ENCODE measurements at regions of chr1 and their contacts with region 1.

Region 1: DNA sequence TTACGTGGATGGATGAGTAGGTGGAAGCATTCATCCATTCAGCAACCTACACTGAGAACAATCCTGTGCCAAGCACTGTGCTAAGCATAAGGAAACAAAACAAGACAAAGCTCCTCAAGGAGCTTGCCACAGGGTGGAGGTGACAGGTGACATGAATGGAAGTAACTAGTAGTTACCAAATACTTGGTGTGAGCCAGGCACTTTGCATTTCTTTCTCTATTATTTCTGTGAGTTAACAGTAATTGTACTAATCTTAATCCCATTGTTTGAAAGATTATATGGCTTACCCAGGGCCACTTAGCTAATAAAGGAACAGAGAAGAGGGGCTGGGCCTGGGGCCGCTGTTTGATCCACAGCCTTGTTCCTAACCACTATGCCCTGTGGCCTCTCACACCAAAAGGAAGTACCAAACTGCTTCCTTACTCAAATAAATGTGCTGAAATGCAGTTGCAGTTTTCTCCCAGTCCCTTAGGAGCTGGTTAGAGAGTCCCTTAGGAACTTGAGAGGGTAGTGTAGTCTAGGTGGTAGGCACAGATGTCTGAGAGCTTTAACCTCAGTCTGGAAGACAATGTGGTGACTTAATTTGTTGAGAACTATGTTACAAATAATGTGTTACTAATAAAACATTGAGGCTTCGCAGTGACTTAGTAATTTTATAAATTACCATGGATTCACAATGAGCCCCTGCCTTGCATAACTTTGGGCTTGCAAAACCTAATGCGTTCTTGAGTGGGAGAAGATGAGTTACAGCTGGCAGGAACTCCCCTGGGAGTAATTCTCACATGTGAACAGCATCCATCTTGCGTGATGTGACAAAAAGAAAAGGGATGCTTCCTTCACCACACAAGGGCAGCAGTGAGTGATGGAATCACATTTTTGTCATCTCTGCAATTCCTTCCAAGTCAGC is 69.8 kb downstream of the MPZL1 start:
- DNase-seq: peak; percentile 98
- H3K4me3 ChIP-seq: no peak overlapping the region
- H3K27ac ChIP-seq: peak overlapping the region; percentile 87
- H3K27me3 ChIP-seq: no peaks in the 10 kb centered on the region
- CTCF ChIP-seq: no peak

Region 2: DNA sequence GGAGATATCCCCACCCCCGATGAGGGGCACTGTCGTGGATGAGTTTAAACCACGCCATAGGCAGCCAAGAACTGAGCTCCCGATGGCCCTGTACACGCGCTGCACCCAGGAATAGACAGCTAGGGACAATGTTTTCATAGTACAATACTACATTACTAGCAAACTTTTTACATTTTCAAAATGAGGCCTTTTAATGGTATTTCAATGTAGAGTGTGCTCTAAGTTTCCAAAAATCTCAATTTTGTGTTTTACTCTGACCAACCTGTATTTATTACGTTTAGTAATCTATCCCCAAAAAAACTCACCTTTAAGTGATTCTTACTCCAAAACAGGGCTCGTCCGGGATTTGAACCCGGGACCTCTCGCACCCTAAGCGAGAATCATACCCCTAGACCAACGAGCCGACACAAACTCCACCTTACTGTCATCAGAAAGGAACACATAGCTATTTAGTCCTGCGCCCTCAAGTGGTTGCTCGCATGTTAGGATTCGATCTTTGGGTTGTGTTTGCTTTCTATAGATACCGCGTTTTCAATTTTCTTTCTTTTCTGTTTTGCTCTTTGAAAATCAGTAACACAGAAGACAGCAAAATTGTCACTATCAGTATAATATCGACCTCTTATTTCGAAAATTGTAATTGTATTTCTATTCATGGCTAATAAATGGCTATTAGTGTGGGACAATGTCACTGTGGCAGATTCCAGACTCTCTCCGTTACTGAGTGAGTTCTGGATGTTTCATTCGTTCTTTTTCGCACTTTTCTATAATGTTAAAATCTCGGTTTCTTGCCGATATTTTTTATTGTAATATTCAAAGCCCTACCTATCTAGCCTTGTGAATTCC is 76.2 kb before region 1 on chr1:
- CTCF ChIA-PET with region 1: interaction called, 11 read pairs
- POLR2A ChIA-PET with region 1: interaction called, 7 read pairs
- DNase-seq: peak; percentile 77
- H3K4me3 ChIP-seq: peak overlapping the region; percentile 95
- H3K27ac ChIP-seq: peak overlapping the region; percentile 90
- H3K27me3 ChIP-seq: no peaks in the 10 kb centered on the region
- CTCF ChIP-seq: peak; percentile 96

Region 3: DNA sequence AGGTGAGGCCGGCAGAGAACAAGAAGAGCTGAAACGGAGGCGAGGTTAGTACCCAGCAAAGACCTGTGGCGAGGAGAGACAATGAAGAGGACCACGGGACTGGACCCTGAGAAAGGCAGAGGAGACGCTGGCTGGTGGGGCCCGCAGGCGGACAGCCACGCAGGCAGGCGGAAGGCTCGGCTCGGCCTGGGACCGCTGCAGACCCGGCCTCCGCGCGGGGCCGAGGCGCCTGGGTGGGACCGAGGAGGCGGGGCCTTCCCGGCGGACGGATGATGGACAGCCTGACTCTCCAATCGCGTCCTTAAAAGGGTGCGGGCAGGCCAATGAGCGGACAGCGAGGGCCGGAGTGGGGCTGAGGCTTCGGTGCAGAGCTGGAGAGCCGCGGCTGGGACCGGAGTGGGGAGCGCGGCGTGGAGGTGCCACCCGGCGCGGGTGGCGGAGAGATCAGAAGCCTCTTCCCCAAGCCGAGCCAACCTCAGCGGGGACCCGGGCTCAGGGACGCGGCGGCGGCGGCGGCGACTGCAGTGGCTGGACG is 69.8 kb before region 1 on chr1 and contains the start of gene MPZL1:
- CTCF ChIA-PET with region 1: interaction called, 4 read pairs
- POLR2A ChIA-PET with region 1: interaction called, 15 read pairs
- DNase-seq: peak; percentile 87
- H3K4me3 ChIP-seq: peak within 1 kb of the TSS; percentile 80
- H3K27ac ChIP-seq: peak within 1 kb of the TSS; percentile 66
- H3K27me3 ChIP-seq: no peaks in the 10 kb centered on the region
- CTCF ChIP-seq: no peak
- polyA plus RNA-seq, gene MPZL1: 144 and 198 TPM in 2 replicates

Region 4: GRCh38 chr1:167775178-167775577 is 16.4 kb before region 1 on chr1:
- CTCF ChIA-PET with region 1: interaction called, 4 read pairs
- POLR2A ChIA-PET with region 1: interaction called, 11 read pairs
- DNase-seq: no peak
- H3K4me3 ChIP-seq: no peak overlapping the region
- H3K27ac ChIP-seq: no peak overlapping the region
- H3K27me3 ChIP-seq: no peaks in the 10 kb centered on the region
- CTCF ChIP-seq: no peak

Region 5: GRCh38 chr1:167849666-167850065 is 58.1 kb after region 1 on chr1:
- CTCF ChIA-PET with region 1: no interaction called
- POLR2A ChIA-PET with region 1: no interaction called
- DNase-seq: no peak
- H3K4me3 ChIP-seq: no peak overlapping the region
- H3K27ac ChIP-seq: no peak overlapping the region
- H3K27me3 ChIP-seq: no peaks in the 10 kb centered on the region
- CTCF ChIP-seq: no peak

Region 6: GRCh38 chr1:167936068-167936929 is 144.8 kb after region 1 on chr1 and contains the start of gene DCAF6:
- CTCF ChIA-PET with region 1: interaction called, 4 read pairs
- POLR2A ChIA-PET with region 1: interaction called, 31 read pairs
- DNase-seq: peak; percentile 96
- H3K4me3 ChIP-seq: peak within 1 kb of the TSS; percentile 93
- H3K27ac ChIP-seq: peak within 1 kb of the TSS; percentile 98
- H3K27me3 ChIP-seq: no peaks in the 10 kb centered on the region
- CTCF ChIP-seq: no peak
- polyA plus RNA-seq, gene DCAF6: 102 and 137 TPM in 2 replicates